CD4-positive, alpha-beta T cell (primary cell): ENCODE measurements at regions of chr1 and their contacts with region 1.

Region 1: GRCh38 chr1:98849969-98850636 is 154.6 kb downstream of the PLPPR5 start:
- DNase-seq: peak in 3 of 14 experiments; percentile 18 to 52 (median 33)
- ATAC-seq: peak; percentile 54
- H3K4me3 ChIP-seq: no peak overlapping the region
- H3K4me3 Mint-ChIP-seq: peak overlapping the region; percentile 55
- H3K27ac ChIP-seq: no peak overlapping the region
- H3K27ac Mint-ChIP-seq: peak overlapping the region; percentile 24
- H3K4me1 ChIP-seq: peaks cover 10% of the 10 kb centered on the region
- H3K4me1 Mint-ChIP-seq: peaks cover 28% of the 10 kb centered on the region
- H3K27me3 ChIP-seq: no peaks in the 10 kb centered on the region
- H3K27me3 Mint-ChIP-seq: no peaks in the 10 kb centered on the region
- CTCF ChIP-seq: no peak

Region 2: DNA sequence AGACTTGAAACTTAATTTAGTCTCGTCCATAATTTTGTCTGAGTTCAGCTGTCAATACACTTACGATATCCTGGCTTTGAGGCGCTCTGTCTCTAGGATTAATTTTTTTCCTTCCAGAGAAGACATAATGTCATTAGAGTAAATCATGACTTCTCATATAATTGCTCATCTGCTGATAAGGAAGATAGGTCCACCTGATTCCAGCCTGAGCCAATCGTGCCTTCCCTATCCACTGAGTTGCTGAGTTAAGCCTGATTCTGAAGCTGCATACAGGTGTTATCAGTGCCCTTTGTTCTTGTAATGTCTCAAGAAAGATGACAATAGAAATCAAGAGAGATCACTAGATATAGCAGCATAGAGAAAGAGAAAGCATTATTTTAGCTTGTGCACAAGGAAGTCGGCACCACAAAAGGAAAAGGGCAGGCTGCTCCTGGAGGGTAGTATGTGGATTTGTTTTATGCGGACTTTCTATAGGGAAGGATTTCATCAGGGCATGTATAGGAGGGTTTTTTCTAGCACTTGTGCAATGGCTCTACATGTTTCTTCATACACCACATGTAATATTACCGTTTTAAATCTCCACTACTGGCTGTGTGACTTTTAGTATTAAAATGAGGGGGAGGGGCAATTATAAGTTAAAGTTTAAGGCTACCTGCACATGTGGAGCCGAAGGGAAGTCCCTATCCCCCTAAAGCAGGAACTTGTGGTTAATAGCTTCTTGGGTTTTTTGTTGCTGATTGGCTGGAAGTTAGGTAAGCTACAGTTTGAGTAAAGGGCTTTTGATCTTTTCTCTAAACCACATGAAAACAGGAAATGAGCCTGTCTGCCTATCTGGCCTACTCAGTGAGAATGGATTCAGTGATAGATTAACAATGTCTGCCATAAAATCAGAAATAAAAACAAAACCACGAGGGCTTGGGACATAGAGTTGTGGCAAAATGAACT is 21.1 kb after region 1 on chr1:
- CTCF ChIA-PET with region 1: no interaction called
- POLR2A ChIA-PET with region 1: interaction called, 17 read pairs
- intact Hi-C with region 1: loop called in 1 of 2 experiments (anchors 2 kb)
- DNase-seq: peak in 12 of 14 experiments; percentile 8 to 96 (median 41)
- ATAC-seq: peak; percentile 92
- H3K4me3 ChIP-seq: peak overlapping the region; percentile 48
- H3K4me3 Mint-ChIP-seq: peak overlapping the region; percentile 86
- H3K27ac ChIP-seq: peak overlapping the region; percentile 59 to 84
- H3K27ac Mint-ChIP-seq: peak overlapping the region; percentile 91
- H3K4me1 ChIP-seq: peaks cover 18% of the 10 kb centered on the region
- H3K4me1 Mint-ChIP-seq: peaks cover 55% of the 10 kb centered on the region
- H3K27me3 ChIP-seq: no peaks in the 10 kb centered on the region
- H3K27me3 Mint-ChIP-seq: no peaks in the 10 kb centered on the region
- CTCF ChIP-seq: no peak

Region 3: DNA sequence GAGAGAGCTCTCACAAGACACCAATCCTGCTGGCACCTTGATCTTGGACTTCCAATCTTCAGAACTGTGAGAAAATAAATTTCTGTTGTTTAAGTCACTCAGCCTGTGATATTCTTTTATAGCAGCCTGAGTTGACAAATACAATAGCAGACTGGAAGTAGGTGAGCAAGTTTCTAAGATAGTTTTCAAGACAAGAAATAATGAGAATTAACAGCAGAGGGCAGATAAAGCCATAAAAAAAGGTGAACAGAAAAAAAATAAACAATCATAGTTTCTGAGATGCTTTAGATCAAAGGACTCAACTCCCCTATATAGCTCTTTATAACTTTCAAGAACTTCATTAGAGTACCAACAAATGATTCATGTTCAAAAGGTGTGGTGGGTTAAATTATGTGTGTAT is 34.8 kb after region 1 on chr1:
- CTCF ChIA-PET with region 1: interaction called, 3 read pairs
- POLR2A ChIA-PET with region 1: no interaction called
- intact Hi-C with region 1: loop called in 1 of 2 experiments (anchors 5 kb)
- DNase-seq: no peak
- ATAC-seq: no peak
- H3K4me3 ChIP-seq: no peak overlapping the region
- H3K4me3 Mint-ChIP-seq: no peak overlapping the region
- H3K27ac ChIP-seq: no peak overlapping the region
- H3K27ac Mint-ChIP-seq: no peak overlapping the region
- H3K4me1 ChIP-seq: no peaks in the 10 kb centered on the region
- H3K4me1 Mint-ChIP-seq: peaks cover 12% of the 10 kb centered on the region
- H3K27me3 ChIP-seq: no peaks in the 10 kb centered on the region
- H3K27me3 Mint-ChIP-seq: no peaks in the 10 kb centered on the region
- CTCF ChIP-seq: no peak